A549 (cell line): ENCODE measurements at regions of chr3 and their contacts with region 1.

Region 1: DNA sequence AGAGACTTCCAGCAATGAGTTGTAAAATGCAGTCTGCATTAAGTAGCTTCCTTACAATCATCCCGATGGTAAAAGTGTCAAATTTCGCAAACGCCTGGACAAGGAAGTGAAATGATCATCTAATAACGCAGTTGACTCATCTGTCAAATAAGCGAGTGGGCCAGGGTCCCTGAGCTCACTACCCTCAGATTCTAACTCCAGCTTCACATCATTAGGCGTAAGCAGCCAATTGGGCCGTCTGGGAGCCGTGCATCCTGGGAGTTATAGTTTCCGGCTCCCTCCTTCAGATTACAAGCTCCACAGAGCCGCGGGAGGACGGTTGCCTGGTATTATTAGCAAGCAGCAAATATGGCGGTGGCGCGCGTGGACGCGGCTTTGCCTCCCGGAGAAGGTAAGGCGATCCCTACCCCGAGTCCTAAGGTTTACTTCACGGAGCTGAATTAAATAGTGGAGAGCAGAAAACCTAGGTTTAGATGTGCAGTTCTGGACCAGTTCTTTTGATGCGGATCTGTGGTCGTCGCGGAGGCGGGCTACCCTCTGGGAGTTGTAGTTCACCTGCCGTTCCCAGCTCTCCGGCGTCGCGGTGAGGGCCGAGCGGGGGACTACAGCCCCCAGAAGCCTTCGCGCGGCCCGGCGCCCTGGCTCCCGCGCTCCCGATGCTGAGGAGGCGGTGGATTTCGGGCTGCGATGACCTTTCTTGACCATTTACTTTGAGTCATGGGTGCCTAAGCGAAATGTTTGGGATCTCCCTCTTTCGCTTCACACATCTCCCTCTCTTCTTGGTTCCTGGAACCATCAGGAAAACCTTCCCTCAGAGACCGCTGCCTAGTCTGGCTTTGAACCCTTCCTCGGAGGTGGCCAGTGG is at the start of gene CEP97:
- DNase-seq: peak; percentile 76 to 93
- ATAC-seq: peak; percentile 98 to 99
- H3K4me3 ChIP-seq: peak within 1 kb of the TSS; percentile 80
- H3K27ac ChIP-seq: peak within 1 kb of the TSS; percentile 78 to 90
- H3K4me1 ChIP-seq: peaks cover 7% of the 10 kb centered on the region
- CTCF ChIP-seq: no peak
- EP300 ChIP-seq: no peak
- POLR2A ChIP-seq: peak; percentile 23; the same call in 1 of the 2 replicates
- RAD21 ChIP-seq: no peak
- polyA plus RNA-seq, gene CEP97: 4.0 and 6.7 TPM in 2 replicates

Region 2: DNA sequence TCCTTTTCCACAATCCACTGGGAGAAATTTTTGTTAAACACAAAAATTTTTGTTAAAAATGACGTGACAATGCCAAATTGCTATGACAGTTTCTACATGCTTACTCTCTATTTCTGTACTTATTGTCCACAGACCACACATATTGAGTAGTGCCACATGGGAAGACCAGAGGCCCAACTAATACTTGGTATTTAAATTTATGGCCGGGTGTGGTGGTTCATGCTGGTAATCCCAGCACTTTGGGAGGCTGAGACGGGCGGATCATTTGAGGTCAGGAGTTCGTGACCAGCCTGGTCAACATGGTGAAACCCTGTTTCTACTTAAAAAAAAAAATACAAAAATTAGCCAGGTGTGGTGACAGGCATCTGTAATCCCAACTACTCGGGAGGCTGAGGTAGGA is 67.9 kb before region 1 on chr3:
- CTCF ChIA-PET with region 1: no interaction called
- POLR2A ChIA-PET with region 1: no interaction called
- DNase-seq: no peak
- ATAC-seq: no peak
- H3K4me3 ChIP-seq: no peak overlapping the region
- H3K27ac ChIP-seq: no peak overlapping the region
- H3K4me1 ChIP-seq: no peaks in the 10 kb centered on the region
- CTCF ChIP-seq: no peak
- EP300 ChIP-seq: no peak
- POLR2A ChIP-seq: no peak
- RAD21 ChIP-seq: no peak

Region 3: GRCh38 chr3:101685870-101686412 is 38.6 kb before region 1 on chr3:
- CTCF ChIA-PET with region 1: no interaction called
- POLR2A ChIA-PET with region 1: interaction called, 12 read pairs
- DNase-seq: no peak
- ATAC-seq: peak; percentile 30 to 32; a peak in 5 of 6 replicates
- H3K4me3 ChIP-seq: peak overlapping the region; percentile 73
- H3K27ac ChIP-seq: peak overlapping the region; percentile 89 to 94
- H3K4me1 ChIP-seq: peaks cover 26% of the 10 kb centered on the region
- CTCF ChIP-seq: no peak
- EP300 ChIP-seq: no peak
- POLR2A ChIP-seq: no peak
- RAD21 ChIP-seq: no peak

Region 4: GRCh38 chr3:101779047-101779821 is 54.7 kb after region 1 on chr3 and contains the start of gene NXPE3:
- CTCF ChIA-PET with region 1: no interaction called
- POLR2A ChIA-PET with region 1: interaction called, 13 read pairs
- DNase-seq: peak; percentile 85 to 90
- ATAC-seq: peak; percentile 94 to 97
- H3K4me3 ChIP-seq: peak within 1 kb of the TSS; percentile 68
- H3K27ac ChIP-seq: peak within 1 kb of the TSS; percentile 92 to 95
- H3K4me1 ChIP-seq: peaks cover 16% of the 10 kb centered on the region; the same call in 2 of the 3 replicates
- CTCF ChIP-seq: no peak
- EP300 ChIP-seq: no peak
- POLR2A ChIP-seq: peak; percentile 71
- RAD21 ChIP-seq: no peak
- polyA plus RNA-seq, gene NXPE3: 49.5 and 52.5 TPM in 2 replicates

Region 5: DNA sequence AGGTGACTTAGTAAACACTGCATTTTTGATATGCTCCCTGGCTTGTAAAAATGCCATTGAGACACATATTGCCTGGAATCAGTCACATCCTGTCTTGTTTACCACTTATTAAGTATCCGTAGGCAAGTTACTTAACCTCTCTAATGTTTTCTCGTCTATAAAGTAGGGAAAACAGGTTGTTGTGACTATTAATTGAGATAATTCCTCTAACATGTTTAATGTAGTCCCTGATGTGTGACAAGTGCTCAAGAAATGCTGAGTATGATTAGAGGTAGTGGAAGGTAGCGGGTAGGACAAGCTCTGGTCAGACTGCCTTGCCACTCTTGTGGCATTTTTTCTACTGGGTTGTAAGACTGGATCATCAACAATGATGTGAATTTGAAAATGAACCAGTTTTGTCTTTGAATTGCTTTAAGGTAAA is 178.9 kb after region 1 on chr3:
- CTCF ChIA-PET with region 1: no interaction called
- POLR2A ChIA-PET with region 1: no interaction called
- DNase-seq: no peak
- ATAC-seq: no peak
- H3K4me3 ChIP-seq: no peak overlapping the region
- H3K27ac ChIP-seq: 0 out of 6 replicates have a peak overlapping the region, but pooled peaks of 1 of the 2 experiments have one; percentile 15
- H3K4me1 ChIP-seq: peaks cover 23% of the 10 kb centered on the region; the same call in 2 of the 3 replicates
- CTCF ChIP-seq: no peak
- EP300 ChIP-seq: no peak
- POLR2A ChIP-seq: no peak
- RAD21 ChIP-seq: no peak